Right ventricle myocardium inferior (tissue), 1 donor: ENCODE measurements at regions of chr15 and their contacts with region 1.

Region 1: GRCh38 chr15:30991255-30992072 is at the start of gene MTMR10:
- DNase-seq: peak; percentile 91
- ATAC-seq: peak; percentile 97
- total RNA-seq, gene MTMR10: 31.4 TPM

Region 2: GRCh38 chr15:30903497-30904201 is 87.8 kb before region 1 on chr15 and contains the start of gene FAN1:
- intact Hi-C with region 1: loop called (anchors 5 kb)
- DNase-seq: peak; percentile 91
- ATAC-seq: peak; percentile 99
- total RNA-seq, gene FAN1: 23.5 TPM

Region 3: GRCh38 chr15:31062310-31062847 is 70.9 kb after region 1 on chr15:
- intact Hi-C with region 1: loop called (anchors 5 kb)
- DNase-seq: no peak
- ATAC-seq: no peak